ENCODE measurements at regions of chr6 and their contacts with region 1.

Region 1: DNA sequence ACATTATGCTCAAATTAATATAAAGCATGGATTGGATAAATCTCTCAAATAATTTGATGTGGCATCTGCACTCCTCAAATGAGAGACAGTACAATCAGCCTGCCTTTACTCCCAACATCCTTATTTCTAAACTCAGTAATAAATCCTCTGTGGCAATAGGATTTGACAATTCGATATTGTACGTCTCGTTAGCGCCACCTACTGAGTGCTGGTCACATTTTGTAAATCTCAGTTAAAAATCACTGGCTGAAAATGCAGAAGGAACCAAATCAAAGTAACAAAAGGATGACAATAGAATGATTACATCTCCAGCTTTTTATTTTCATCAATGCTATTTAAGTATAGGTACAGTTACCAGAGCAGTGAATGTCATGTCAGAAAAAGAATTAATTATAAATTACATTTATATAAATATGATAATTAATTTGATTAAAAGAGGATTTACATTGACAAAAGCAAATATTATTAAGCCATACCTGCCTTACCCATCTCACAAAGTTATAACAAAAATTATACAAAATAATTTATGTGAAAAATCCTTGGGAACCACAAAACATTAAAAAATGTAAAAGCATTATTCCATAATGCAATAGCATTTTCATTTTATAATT is 20.2 kb upstream of the GJE1 start:
- DNase-seq: peak; percentile 23
- CTCF ChIP-seq: peak; percentile 73

Region 2: GRCh38 chr6:141677598-141678211 is 434.9 kb before region 1 on chr6:
- in situ Hi-C with region 1: loop called (anchors 25 kb)
- DNase-seq: no peak
- CTCF ChIP-seq: peak; percentile 49

Region 3: DNA sequence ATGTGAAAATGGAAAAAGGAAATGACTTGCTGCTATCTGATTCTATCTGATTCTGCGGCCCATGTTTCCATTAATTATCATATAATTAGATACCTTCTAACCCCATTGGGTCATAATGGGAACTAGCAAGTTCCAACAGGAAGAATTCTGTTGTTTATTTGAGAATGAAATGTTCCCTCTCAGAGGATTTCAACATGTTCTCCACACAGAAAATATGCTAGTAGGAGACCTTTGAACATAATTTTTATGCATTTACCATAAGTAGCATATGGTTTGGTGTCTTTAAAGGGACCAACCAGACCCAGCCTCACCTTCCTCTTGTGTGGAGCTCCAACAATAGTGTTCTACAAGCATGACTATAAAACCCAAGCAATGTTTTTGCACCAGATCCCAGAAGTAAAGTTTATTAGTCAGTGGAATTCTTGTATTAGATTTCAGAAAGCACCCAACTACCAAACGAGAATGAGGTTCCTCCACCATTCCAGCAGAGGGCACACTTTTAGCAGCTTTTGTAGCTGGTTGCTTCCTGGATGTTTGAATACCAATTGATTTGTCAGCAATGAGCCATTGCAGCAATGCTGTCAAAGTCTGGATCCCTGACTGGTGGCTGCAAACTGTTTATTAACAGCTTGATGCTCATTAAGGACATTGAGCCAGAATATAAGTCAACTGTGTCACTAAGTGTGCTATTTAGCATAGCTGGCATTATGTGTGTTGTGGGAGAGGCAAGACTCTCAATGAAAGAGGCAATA is 123.4 kb before region 1 on chr6:
- in situ Hi-C with region 1: loop called (anchors 25 kb)
- DNase-seq: peak; percentile 35
- CTCF ChIP-seq: no peak

Region 4: DNA sequence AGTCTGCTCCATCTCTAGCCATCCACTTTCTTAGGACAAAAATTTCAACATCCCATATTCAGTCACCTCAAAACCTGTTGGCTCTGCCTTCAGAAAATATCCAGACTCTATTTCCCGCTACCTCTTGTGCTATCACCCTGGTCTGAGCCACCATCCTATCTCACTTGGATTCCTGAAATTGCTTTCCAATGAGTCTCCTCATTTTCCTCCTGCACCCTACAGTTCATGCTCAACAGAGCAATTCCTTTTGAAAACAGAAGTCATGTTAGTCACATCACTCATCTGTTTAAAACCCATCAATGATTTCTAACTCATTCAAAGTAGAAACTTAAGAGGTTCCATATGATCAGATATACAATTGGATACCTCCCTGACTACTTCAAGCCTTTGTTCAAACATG is 419.2 kb after region 1 on chr6:
- in situ Hi-C with region 1: no loop called
- DNase-seq: no peak
- CTCF ChIP-seq: no peak

Measured in GM13976 (cell line).